ENCODE measurements at regions of chr14 and their contacts with region 1.

Region 1: DNA sequence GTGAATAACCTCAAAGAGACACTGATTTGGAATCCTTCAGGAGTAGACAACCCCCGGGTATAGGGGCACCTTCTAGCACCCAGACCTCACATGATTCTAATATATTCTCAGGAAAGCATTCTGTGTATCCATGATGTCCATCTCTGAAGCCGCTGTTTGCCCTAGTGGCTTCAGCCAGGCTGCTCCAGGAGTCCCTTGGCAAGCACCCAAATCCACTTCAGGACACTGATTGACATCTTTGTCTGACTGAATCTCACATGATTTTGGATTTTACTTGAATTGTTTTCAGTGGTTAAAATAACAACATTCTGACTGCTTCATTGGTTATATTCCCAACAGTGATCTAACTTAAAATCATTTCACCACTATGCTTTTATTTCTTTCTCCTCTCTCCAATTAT is 390.5 kb upstream of the CLEC14A start:
- DNase-seq: no peak
- ATAC-seq: no peak
- H3K4me3 ChIP-seq: no peak overlapping the region
- H3K4me3 Mint-ChIP-seq: no peak overlapping the region
- H3K27ac ChIP-seq: no peak overlapping the region
- H3K27ac Mint-ChIP-seq: no peak overlapping the region
- H3K4me1 ChIP-seq: no peaks in the 10 kb centered on the region
- H3K4me1 Mint-ChIP-seq: no peaks in the 10 kb centered on the region
- H3K27me3 ChIP-seq: no peaks in the 10 kb centered on the region
- H3K27me3 Mint-ChIP-seq: no peaks in the 10 kb centered on the region
- CTCF ChIP-seq: no peak

Region 2: GRCh38 chr14:38623661-38624060 is 22.7 kb before region 1 on chr14:
- CTCF ChIA-PET with region 1: no interaction called
- POLR2A ChIA-PET with region 1: no interaction called
- intact Hi-C with region 1: loop called in 1 of 2 experiments (anchors 1 kb)
- DNase-seq: no peak
- ATAC-seq: no peak
- H3K4me3 ChIP-seq: no peak overlapping the region
- H3K4me3 Mint-ChIP-seq: no peak overlapping the region
- H3K27ac ChIP-seq: no peak overlapping the region
- H3K27ac Mint-ChIP-seq: no peak overlapping the region
- H3K4me1 ChIP-seq: no peaks in the 10 kb centered on the region
- H3K4me1 Mint-ChIP-seq: no peaks in the 10 kb centered on the region
- H3K27me3 ChIP-seq: no peaks in the 10 kb centered on the region
- H3K27me3 Mint-ChIP-seq: no peaks in the 10 kb centered on the region
- CTCF ChIP-seq: no peak

Region 3: GRCh38 chr14:38862366-38862765 is 216.0 kb after region 1 on chr14:
- CTCF ChIA-PET with region 1: no interaction called
- POLR2A ChIA-PET with region 1: no interaction called
- intact Hi-C with region 1: no loop called
- DNase-seq: no peak
- ATAC-seq: no peak
- H3K4me3 ChIP-seq: no peak overlapping the region
- H3K4me3 Mint-ChIP-seq: no peak overlapping the region
- H3K27ac ChIP-seq: no peak overlapping the region
- H3K27ac Mint-ChIP-seq: no peak overlapping the region
- H3K4me1 ChIP-seq: no peaks in the 10 kb centered on the region
- H3K4me1 Mint-ChIP-seq: no peaks in the 10 kb centered on the region
- H3K27me3 ChIP-seq: no peaks in the 10 kb centered on the region
- H3K27me3 Mint-ChIP-seq: peaks cover 12% of the 10 kb centered on the region
- CTCF ChIP-seq: no peak